RWPE1 (cell line): ENCODE measurements at regions of chr2 and their contacts with region 1.

Region 1: GRCh38 chr2:119476301-119477021 is 44.8 kb downstream of the TMEM37 start:
- DNase-seq: peak; percentile 63
- H3K27ac ChIP-seq: no peak overlapping the region
- CTCF ChIP-seq: peak; percentile 91

Region 2: GRCh38 chr2:119441376-119442225 is 34.9 kb before region 1 on chr2:
- CTCF ChIA-PET with region 1: no interaction called
- POLR2A ChIA-PET with region 1: no interaction called
- DNase-seq: no peak
- H3K27ac ChIP-seq: no peak overlapping the region
- CTCF ChIP-seq: no peak

Region 3: DNA sequence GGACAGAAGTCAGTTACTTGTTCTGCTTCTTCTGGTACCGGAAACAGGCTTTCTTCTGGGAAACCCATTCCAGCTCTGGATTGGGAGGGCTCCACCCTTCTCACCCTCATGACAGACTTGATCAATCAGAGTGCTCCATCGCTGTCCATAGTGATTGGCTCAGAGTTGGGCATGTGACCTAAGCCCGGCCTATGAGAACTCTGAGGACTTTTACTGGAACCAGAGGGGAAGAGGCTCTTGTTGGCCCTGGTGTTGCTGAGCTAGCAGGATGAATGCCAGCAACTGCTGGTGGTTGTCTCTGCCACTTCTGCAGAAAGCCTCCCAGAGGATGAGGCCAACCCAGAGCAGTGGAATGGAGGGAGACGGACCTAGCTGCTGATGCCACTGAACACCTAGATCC is 11.5 kb before region 1 on chr2:
- CTCF ChIA-PET with region 1: interaction called, 15 read pairs
- POLR2A ChIA-PET with region 1: no interaction called
- DNase-seq: no peak
- H3K27ac ChIP-seq: no peak overlapping the region
- CTCF ChIP-seq: no peak

Region 4: GRCh38 chr2:119487434-119488244 is 11.2 kb after region 1 on chr2:
- CTCF ChIA-PET with region 1: interaction called, 22 read pairs
- POLR2A ChIA-PET with region 1: no interaction called
- DNase-seq: no peak
- H3K27ac ChIP-seq: no peak overlapping the region
- CTCF ChIP-seq: no peak